ENCODE measurements at regions of chr19 and their contacts with region 1.

Region 1: DNA sequence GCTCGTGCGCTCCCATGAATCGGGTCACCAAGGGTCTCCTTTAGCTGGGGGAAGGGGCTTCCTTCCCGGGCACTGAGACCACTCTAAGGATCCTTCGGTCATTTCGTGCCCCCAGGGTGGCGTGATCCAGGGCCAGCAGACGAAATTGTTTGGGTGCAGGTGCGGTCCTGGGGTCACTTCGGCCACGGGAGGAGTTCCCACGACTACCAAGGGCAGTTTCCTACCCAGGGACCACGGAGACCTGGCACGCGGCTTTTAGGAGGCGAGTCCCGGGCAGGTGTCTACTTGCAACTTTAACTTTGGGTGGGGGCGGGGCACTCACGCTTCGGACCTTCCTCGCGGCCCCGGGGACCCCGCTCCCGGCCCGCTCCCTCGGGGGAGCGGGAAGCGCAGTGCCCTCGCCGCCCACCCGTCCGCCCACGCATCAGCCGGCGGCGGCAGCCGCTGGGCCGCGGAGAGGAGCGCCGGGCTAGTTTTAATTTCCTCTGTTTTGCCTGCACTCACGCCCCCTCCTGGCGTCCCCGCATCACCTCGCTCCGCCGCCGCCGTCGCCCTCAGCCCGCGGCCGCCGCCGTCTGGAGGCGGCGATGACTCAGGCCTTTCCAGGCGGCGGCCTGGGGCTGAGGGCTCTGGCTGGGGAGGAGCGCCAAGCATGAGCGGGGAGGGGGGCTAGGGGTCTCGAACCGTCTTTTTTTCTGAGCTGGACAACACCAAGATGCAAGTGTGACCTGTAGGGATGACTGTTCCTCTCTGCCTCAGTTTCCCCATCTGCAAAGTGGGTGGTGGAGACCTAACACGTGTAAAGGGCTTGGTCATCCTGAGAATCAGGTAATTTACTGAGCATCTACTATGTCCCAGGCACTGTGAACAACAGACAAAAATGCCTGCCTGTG is 21.8 kb downstream of the OLFM2 start:
- DNase-seq: peak; percentile 90
- H3K4me3 Mint-ChIP-seq: peak overlapping the region; percentile 71
- H3K27ac Mint-ChIP-seq: no peak overlapping the region
- H3K4me1 Mint-ChIP-seq: peaks cover 4% of the 10 kb centered on the region
- H3K27me3 Mint-ChIP-seq: peaks cover 16% of the 10 kb centered on the region

Region 2: DNA sequence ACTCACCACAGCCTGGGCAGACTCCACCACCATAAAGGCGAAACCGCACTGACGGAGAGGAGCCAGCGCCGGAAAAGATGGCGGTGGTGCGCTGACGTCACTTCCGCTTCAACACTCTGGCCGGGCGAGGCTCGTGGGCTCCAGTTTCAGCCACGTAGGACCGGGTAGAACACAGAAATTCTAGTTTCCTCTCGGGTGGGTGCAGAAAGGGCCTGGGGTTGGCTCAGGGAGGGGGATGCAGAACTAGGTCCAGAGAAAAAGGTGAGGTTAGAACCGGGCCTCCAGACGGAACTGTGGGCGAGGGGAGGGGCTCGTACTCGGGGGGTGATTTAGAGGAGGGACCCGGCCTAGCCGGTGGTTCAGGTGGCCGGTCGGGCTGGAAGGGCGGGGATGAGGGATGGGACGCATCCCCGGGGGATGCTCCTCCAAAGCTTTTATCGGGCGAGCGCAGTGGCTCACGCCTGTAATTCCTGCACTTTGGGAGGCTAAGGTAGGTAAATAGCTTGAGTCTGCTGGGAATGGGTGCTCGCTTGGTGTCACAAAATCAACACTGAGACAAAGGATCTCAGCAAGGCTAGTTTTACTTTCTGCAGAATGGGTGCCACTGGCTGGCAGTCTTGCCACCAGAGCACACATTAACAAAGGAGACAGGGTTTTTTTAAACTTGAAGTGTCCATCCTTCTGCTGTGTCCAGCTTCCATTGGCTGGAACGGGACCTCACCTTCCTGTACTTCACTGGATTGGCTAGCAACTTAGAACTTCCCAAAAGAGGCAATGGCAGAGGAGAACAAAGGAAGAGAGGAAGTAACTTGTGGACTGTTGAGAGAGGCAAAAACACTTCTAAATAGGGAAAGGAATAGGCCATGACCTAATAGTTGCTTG is 293.2 kb before region 1 on chr19 and contains the start of gene ZNF561:
- CTCF ChIA-PET with region 1: no interaction called
- intact Hi-C with region 1: loop called (anchors 5 kb)
- DNase-seq: peak; percentile 90
- H3K4me3 Mint-ChIP-seq: peak within 1 kb of the TSS; percentile 98
- H3K27ac Mint-ChIP-seq: peak within 1 kb of the TSS; percentile 99
- H3K4me1 Mint-ChIP-seq: peaks cover 18% of the 10 kb centered on the region
- H3K27me3 Mint-ChIP-seq: no peaks in the 10 kb centered on the region
- total RNA-seq, gene ZNF561: 28.7 to 29.4 TPM

Region 3: GRCh38 chr19:9847087-9847671 is 67.4 kb before region 1 on chr19:
- CTCF ChIA-PET with region 1: no interaction called
- intact Hi-C with region 1: loop called (anchors 1 kb)
- DNase-seq: peak; percentile 60
- H3K4me3 Mint-ChIP-seq: no peak overlapping the region
- H3K27ac Mint-ChIP-seq: no peak overlapping the region
- H3K4me1 Mint-ChIP-seq: peaks cover 15% of the 10 kb centered on the region
- H3K27me3 Mint-ChIP-seq: no peaks in the 10 kb centered on the region

Region 4: GRCh38 chr19:9857920-9858746 is 56.4 kb before region 1 on chr19:
- CTCF ChIA-PET with region 1: no interaction called
- intact Hi-C with region 1: loop called (anchors 1 kb)
- DNase-seq: peak; percentile 32
- H3K4me3 Mint-ChIP-seq: peak overlapping the region; percentile 53
- H3K27ac Mint-ChIP-seq: peak overlapping the region; percentile 91
- H3K4me1 Mint-ChIP-seq: peaks cover 67% of the 10 kb centered on the region
- H3K27me3 Mint-ChIP-seq: no peaks in the 10 kb centered on the region

Region 5: GRCh38 chr19:9871626-9872338 is 42.8 kb before region 1 on chr19:
- CTCF ChIA-PET with region 1: no interaction called
- intact Hi-C with region 1: no loop called
- DNase-seq: no peak
- H3K4me3 Mint-ChIP-seq: no peak overlapping the region
- H3K27ac Mint-ChIP-seq: no peak overlapping the region
- H3K4me1 Mint-ChIP-seq: peaks cover under 1% of the 10 kb centered on the region
- H3K27me3 Mint-ChIP-seq: no peaks in the 10 kb centered on the region

Region 6: GRCh38 chr19:9934132-9934950 is 19.8 kb after region 1 on chr19:
- CTCF ChIA-PET with region 1: interaction called, 18 read pairs
- intact Hi-C with region 1: no loop called
- DNase-seq: peak; percentile 91
- H3K4me3 Mint-ChIP-seq: no peak overlapping the region
- H3K27ac Mint-ChIP-seq: no peak overlapping the region
- H3K4me1 Mint-ChIP-seq: peaks cover 28% of the 10 kb centered on the region
- H3K27me3 Mint-ChIP-seq: peaks cover 56% of the 10 kb centered on the region

Measured in activated naive CD4-positive, alpha-beta T cell treated with anti-CD3 and anti-CD28 coated beads for 36 hours (primary cell).